Activated CD4-positive, alpha-beta memory T cell treated with anti-CD3 and anti-CD28 coated beads for 36 hours (primary cell): ENCODE measurements at regions of chr9 and their contacts with region 1.

Region 1: DNA sequence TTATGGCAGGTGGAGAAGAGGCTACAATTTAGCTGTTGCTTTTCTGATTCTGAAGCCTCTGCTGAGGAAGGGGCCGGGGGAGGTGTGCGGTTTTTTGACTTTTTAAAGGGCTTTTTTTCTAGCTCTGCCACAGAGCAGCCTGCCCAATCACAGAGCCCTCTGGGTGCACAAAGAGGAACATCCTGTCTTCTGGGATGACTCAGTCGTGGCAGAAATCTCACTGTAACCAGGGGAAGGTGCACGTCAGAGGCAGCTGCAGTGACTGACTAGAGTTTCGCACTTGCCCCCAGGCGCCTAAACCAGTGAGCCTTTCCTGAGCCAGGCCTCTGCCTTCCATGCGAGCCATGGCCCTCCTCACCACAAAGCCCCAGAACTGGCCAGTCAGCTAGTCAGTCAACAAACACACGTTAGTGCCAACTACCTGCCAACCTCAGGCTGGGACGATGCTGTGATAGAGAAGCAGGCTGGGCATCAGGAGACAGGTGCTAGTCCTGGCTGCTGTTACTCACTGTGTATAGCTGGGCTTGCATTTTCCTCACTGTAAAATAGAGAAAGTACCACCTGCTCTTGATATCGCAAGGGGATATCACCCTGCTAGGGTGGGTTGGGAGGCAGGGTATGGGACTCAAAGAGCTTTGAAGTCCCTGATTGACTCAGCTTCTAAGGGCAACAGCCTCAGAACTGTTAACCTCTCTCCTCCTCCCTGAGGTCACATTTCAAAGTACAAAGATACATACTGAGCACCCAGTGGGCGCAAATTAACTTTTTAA is 2.2 kb downstream of the AKNA start:
- DNase-seq: peak; percentile 95
- H3K4me3 Mint-ChIP-seq: peak overlapping the region; percentile 99
- H3K27ac Mint-ChIP-seq: peak overlapping the region; percentile 94
- H3K4me1 Mint-ChIP-seq: peaks cover 65% of the 10 kb centered on the region
- H3K27me3 Mint-ChIP-seq: no peaks in the 10 kb centered on the region

Region 2: DNA sequence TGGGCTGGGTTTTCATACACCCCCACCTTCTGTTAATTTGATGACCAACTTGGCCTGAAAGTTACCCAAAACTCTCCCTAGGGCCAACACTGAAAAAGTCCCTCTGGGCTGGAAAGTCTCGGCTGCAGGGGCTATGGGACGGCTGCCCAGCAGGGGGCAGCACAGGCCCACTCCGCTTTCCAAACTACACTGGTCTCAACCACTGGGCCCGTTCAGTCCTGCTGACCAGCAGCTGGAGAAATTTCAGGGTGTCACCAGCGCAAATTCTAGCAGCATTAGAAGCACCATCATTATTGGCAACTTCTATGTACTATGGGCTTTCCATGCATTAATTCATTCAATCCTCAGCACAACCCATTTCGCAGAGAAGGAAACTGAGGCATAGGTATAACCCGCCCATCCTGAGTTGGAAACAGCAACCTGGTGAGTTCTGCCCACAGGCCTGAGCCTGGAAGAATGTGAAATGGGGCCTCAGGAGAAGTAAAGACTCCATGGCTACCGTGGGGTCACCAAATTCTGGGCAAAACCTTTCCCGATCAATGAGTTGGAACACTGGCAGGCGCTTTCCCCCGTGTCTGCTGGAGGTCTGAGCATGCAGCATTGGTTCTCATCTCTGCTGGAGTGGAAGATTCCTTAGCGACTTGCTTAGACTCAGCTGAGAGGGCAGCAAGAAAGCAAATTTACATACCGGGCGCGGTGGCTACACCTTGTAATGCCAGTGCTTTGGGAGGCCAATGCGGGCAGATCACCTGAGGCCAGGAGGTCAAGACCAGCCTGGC is 46.3 kb before region 1 on chr9:
- CTCF ChIA-PET with region 1: interaction called, 46 read pairs
- POLR2A ChIA-PET with region 1: interaction called, 4 read pairs
- intact Hi-C with region 1: loop called (anchors 2 kb)
- DNase-seq: peak; percentile 71
- H3K4me3 Mint-ChIP-seq: no peak overlapping the region
- H3K27ac Mint-ChIP-seq: peak overlapping the region; percentile 64
- H3K4me1 Mint-ChIP-seq: peaks cover 3% of the 10 kb centered on the region
- H3K27me3 Mint-ChIP-seq: no peaks in the 10 kb centered on the region

Region 3: DNA sequence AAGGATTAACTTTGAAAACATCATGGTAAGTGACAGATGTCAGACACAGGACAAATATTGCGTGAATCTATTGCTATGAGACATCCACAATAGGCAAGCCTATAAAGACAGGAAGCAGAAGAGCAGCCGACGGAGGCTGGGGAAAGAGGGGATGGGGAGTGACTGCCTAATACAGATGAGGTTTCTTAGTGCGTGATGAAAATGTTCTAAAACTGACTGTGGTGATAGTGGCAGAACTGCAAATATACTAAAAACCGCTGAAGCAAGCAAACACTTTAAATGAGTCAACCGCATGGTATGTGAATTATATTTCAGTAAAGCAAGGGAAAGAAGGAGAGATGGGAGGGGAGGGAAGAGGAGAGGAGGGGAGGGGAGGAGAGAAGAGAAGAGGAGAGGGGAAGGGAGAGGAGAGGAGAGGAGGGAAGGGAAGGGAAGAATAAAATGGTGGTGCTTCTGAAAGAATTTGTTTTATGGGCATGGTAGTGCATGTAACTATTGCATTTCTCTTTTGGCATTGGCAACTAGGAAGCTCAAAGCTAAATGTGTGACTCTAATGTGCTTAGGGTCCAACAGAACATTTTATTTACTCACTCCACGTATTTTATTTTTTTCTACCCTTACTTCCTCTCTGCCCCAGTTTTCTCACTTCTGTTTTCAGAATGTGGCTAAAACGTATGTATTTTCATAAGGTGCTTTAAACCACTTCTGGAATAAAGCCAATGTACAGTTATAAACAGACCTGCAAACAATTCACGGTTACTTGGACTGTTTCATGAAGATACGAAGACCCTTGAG is 19.1 kb before region 1 on chr9:
- CTCF ChIA-PET with region 1: interaction called, 78 read pairs
- POLR2A ChIA-PET with region 1: interaction called, 100 read pairs
- intact Hi-C with region 1: loop called (anchors 1 kb)
- DNase-seq: peak; percentile 75
- H3K4me3 Mint-ChIP-seq: peak overlapping the region; percentile 33
- H3K27ac Mint-ChIP-seq: peak overlapping the region; percentile 87
- H3K4me1 Mint-ChIP-seq: peaks cover 81% of the 10 kb centered on the region
- H3K27me3 Mint-ChIP-seq: no peaks in the 10 kb centered on the region

Region 4: DNA sequence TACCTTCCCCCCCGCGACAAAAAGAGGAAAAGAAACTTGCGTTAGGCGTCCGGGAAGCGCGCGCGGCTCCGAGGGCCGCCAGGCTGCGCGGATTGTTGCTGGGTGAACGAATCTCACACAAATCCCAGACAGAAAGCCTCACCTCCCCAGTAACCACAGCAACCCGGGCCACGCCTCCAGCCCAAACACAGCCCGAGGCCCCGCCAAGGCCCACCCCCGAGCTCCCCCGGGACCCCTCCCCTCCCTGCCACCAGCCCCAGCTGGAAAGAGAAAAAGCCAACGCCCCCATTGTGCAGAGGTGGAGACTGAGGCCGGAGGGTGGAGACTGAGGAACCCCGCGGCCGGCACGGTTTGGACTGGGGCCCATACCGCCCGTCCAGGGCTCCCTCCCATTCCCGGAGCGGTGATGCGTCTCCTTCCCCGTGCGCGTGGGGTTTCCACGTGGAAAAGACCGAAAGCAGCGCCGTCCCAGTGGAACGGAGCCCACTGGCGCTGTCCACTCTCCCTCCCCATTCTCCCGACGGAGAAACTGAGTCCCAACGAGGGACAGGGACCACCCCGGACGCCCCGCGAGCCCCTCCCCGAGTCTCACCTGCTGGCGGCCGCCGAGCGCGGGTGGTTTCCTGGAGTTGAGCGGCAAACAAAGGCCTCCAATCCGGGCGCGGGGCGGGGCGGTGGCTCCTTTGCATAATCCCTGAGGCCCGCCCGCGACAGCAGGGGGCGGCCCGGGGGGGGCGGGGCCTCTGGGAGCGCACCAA is 12.4 kb after region 1 on chr9:
- CTCF ChIA-PET with region 1: interaction called, 7 read pairs
- POLR2A ChIA-PET with region 1: interaction called, 80 read pairs
- intact Hi-C with region 1: loop called (anchors 1 kb)
- DNase-seq: peak; percentile 97
- H3K4me3 Mint-ChIP-seq: peak overlapping the region; percentile 95
- H3K27ac Mint-ChIP-seq: peak overlapping the region; percentile 90
- H3K4me1 Mint-ChIP-seq: peaks cover 44% of the 10 kb centered on the region
- H3K27me3 Mint-ChIP-seq: no peaks in the 10 kb centered on the region

Region 5: DNA sequence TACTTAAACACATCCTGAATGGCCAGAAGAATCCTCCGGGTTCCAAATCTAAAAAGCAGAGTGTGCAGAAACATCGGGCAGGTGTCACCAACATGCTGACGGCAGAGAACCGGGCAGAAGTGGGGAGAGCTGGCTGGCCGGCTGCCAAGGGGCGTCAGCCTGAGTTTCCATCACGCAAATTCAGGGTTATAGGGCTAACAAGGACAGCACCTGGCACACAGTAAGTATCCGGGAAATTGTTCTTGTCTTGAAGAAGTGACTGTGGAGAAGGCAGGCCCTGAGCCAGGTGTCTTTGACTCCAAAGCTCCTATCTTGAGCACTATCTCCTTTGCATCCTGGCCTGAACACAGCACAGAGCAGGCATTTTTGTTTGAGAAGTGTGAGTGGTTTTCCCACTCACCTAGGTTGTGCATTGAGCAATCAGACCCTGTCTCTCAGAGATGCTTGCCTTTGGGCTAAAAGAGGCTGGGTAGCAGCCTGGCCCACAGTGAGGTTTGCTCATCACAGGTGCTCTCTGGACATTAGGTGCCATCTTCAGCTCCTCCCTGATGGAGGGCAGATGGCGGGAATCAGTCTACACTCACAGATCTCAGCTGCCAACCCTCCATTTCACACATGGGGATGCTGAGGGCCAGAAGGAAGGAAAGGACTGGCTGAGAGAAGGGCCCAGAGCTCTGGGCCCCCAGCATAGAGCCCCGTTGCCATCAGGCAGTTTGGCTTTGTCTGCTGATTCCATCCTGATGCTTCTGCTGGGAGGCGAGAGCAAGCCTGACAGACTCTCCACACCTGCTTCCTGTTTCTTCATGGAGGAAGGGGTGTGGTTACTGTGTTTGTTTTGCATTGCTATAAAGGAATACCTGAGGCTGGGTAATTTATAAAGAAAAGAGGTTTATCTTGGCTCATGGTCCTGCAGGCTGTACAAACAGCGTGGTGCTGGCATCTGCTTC is 66.9 kb after region 1 on chr9:
- CTCF ChIA-PET with region 1: no interaction called
- POLR2A ChIA-PET with region 1: no interaction called
- intact Hi-C with region 1: no loop called
- DNase-seq: peak; percentile 59
- H3K4me3 Mint-ChIP-seq: no peak overlapping the region
- H3K27ac Mint-ChIP-seq: peak overlapping the region; percentile 64
- H3K4me1 Mint-ChIP-seq: peaks cover 27% of the 10 kb centered on the region
- H3K27me3 Mint-ChIP-seq: no peaks in the 10 kb centered on the region

Region 6: GRCh38 chr9:114930056-114930812 is 544.6 kb after region 1 on chr9 and contains the start of gene TNFSF8:
- CTCF ChIA-PET with region 1: no interaction called
- POLR2A ChIA-PET with region 1: no interaction called
- intact Hi-C with region 1: loop called (anchors 5 kb)
- DNase-seq: peak; percentile 90
- H3K4me3 Mint-ChIP-seq: peak within 1 kb of the TSS; percentile 94
- H3K27ac Mint-ChIP-seq: peak within 1 kb of the TSS; percentile 97
- H3K4me1 Mint-ChIP-seq: peaks cover 44% of the 10 kb centered on the region
- H3K27me3 Mint-ChIP-seq: no peaks in the 10 kb centered on the region
- total RNA-seq, gene TNFSF8: 37.9 to 38.7 TPM